CD14-positive monocyte (primary cell): ENCODE measurements at regions of chr16 and their contacts with region 1.

Region 1: GRCh38 chr16:31142109-31143010 is 6.8 kb upstream of the PRSS8 start:
- DNase-seq: peak; percentile 91 to 96 (median 94)
- H3K4me3 ChIP-seq: peak overlapping the region; percentile 7 to 70 (median 28)
- H3K4me3 Mint-ChIP-seq: peak overlapping the region; percentile 73 to 85
- H3K27ac ChIP-seq: peak overlapping the region; percentile 72 to 78
- H3K27ac Mint-ChIP-seq: peak overlapping the region; percentile 85 to 95 (median 93)
- H3K4me1 ChIP-seq: peaks cover 35 to 47% of the 10 kb centered on the region in 2 donors
- H3K4me1 Mint-ChIP-seq: peaks cover 36% of the 10 kb centered on the region
- H3K27me3 ChIP-seq: no peaks in the 10 kb centered on the region
- H3K27me3 Mint-ChIP-seq: peaks cover 0 to 4% (median 2%) of the 10 kb centered on the region in 3 donors
- CTCF ChIP-seq: peak; percentile 90

Region 2: DNA sequence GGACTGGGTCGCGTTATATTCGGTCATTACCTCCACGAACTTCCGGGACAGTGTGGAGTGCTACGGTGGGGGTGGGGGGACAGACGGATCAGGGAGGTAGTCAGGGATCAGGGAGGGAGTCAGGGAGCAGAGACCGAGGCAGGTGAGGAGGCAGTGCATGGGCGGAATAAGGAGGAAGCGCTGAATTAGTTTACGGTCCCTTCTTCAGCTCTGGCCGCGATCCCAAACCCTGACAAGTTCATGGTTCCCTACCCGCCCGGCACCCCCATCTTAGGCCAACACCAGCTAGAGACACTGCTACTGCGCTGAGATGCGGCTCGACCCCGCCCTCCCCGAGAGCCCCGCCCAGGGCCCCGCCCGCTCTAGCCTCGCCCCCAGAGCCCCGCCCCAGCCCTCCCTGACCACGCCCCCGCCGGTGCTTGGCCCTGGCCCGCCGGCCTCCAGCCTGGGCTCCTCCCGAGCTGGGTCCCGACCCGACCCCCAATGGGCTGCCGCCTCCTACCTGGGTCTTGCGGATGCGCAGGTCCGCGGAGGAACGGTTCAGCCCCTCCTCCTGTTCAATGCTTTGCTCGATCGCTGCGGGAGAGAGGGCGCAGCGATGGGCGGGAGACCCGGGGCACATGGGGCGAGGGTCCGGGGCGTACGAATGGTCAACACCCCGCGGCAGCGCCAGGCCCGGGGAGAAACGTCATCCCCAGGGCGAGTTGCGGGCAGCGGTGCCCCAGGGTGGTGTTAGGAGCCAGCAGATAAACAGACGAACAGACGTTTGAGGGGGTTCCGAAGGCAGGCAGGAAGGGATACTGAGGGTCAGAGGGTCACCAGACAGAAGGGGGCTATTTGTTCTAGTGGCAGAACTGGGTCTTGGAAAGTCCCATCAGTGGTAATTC is 145.1 kb before region 1 on chr16:
- intact Hi-C with region 1: loop called in 1 of 2 experiments (anchors 10 kb)
- DNase-seq: peak; percentile 79 to 82 (median 80)
- H3K4me3 ChIP-seq: peak overlapping the region; percentile 53 to 83 (median 58)
- H3K4me3 Mint-ChIP-seq: peak overlapping the region; percentile 83 to 93
- H3K27ac ChIP-seq: peak overlapping the region; percentile 67 to 87
- H3K27ac Mint-ChIP-seq: peak overlapping the region; percentile 82 to 94 (median 89)
- H3K4me1 ChIP-seq: peaks cover 24 to 32% of the 10 kb centered on the region in 2 donors
- H3K4me1 Mint-ChIP-seq: peaks cover 31% of the 10 kb centered on the region
- H3K27me3 ChIP-seq: peaks cover 0 to 3% of the 10 kb centered on the region in 2 donors
- H3K27me3 Mint-ChIP-seq: peaks cover 1 to 17% (median 4%) of the 10 kb centered on the region in 3 donors
- CTCF ChIP-seq: no peak

Region 3: DNA sequence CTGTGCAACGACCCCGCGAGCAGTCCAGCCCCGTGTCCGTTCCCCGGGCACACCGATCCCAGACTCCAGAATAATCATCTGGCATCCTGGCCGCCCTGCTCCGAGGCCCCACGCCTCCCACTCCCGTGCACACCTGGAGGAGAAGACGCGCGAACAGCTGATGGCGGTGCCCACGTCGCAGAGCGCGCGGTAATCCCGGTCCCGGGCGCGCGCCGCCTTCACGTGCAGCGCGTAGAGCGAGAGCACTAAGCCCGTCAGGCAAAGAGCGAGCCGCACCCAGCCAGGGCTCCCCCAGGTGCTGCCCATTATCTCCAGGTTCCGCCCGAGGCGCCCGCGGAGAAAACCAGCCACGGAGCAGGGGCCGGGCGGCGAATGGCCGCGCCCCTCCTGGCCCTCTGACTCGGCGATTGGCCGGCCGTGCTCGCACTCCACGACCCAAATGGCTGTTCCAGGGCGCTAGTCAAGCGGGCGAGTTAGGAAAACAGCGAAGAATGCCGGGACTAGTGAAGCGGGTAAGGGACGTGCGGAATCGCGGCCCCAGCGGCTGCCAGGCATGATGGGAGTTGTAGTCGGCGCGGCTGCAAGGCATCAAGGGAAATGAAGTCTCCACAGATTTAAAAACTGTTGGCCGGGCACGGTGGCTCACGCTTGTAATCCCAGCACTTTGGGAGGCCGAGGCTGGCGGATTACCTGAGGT is 47.8 kb before region 1 on chr16 and contains the start of gene VKORC1:
- intact Hi-C with region 1: loop called in 1 of 2 experiments (anchors 10 kb)
- DNase-seq: peak; percentile 92 to 94 (median 93)
- H3K4me3 ChIP-seq: peak within 1 kb of the TSS; percentile 49 to 92 (median 92)
- H3K4me3 Mint-ChIP-seq: peak within 1 kb of the TSS; percentile 89 to 98
- H3K27ac ChIP-seq: peak within 1 kb of the TSS; percentile 52 to 74
- H3K27ac Mint-ChIP-seq: peak within 1 kb of the TSS; percentile 66 to 92 (median 86)
- H3K4me1 ChIP-seq: peaks cover 25 to 29% of the 10 kb centered on the region in 2 donors
- H3K4me1 Mint-ChIP-seq: peaks cover 21% of the 10 kb centered on the region
- H3K27me3 ChIP-seq: no peaks in the 10 kb centered on the region
- H3K27me3 Mint-ChIP-seq: peaks cover 0 to 4% (median 1%) of the 10 kb centered on the region in 3 donors
- CTCF ChIP-seq: no peak
- polyA plus RNA-seq, gene VKORC1: 59.2 to 113 (median 91.2) TPM

Region 4: DNA sequence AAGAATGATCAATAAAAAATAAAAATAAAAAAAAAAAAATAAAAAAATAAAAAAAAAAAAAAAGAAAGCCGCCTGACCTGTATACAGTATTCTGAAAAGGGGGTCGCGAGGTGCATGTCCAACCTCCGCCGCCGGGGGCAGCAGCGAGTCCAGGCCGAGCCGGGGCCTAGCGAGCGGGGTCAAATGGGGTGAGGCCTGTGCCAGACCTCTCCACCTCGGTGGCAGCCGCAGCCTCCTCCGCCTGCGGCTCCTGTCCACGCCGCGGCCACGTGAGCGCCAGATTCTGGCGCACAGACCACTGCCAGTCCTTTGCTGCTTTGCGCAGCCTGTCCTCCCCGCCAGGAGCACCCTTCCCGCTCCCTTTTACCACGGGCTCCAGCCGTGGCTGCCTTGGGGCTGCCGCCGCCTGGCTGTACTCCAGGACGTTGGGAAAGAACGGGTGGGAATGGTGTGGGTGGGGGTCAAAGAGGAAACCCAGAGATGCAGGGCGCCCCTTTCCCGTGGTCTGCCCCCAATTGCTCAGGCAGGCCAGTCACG is 36.6 kb before region 1 on chr16:
- intact Hi-C with region 1: loop called in 1 of 2 experiments (anchors 2 kb)
- DNase-seq: peak; percentile 78 to 87 (median 82)
- H3K4me3 ChIP-seq: peak overlapping the region in 2 of 3 experiments; percentile 18 to 57
- H3K4me3 Mint-ChIP-seq: peak overlapping the region; percentile 56 to 73
- H3K27ac ChIP-seq: no peak overlapping the region
- H3K27ac Mint-ChIP-seq: peak overlapping the region in 6 of 7 donors; percentile 75 to 87 (median 84)
- H3K4me1 ChIP-seq: peaks cover 26 to 37% of the 10 kb centered on the region in 2 donors
- H3K4me1 Mint-ChIP-seq: peaks cover 22% of the 10 kb centered on the region
- H3K27me3 ChIP-seq: no peaks in the 10 kb centered on the region
- H3K27me3 Mint-ChIP-seq: peaks cover 0 to 2% (median 2%) of the 10 kb centered on the region in 3 donors
- CTCF ChIP-seq: peak; percentile 81

Region 5: DNA sequence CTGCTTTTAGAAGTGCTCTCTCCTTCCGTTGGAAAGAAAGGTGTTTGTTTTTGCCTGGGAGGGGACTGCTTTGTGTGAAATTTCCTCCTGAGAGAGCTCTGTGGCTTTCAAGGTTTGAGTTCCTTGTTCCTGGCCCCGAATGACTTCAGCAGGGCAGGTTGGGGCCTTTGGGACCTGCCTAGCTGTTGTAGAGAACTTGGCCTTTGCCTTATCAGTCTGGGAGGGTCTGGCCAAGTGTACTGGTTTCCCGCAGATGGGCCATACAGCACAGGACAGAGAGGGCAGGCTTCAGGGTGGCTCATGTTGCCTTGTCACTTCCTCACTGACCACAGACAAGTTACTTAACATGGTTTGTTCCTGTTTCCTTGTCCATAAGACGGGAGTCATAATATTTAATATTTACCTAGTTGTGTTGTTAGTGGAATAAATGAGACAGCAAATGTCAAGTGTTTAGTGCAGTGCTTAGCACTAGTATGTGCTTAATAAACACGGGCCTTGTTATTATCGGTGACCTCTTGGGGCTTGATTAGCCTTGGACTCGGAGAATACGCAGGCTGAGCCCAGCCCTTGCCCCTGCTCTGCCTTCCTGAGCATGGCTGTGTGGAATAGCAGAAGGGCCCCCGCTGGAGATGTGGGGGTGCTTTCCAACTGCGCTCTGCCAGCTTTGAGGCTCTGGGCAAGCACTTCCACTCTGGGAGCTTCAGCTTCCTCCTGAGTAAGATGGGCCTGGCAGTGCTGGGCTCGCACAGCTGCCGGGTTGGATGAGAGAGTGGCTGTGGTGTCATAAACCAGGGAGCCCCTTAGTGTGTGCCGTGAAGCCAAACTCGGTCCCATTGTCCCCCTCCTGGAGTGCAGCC is 13.4 kb before region 1 on chr16:
- intact Hi-C with region 1: loop called in 1 of 2 experiments (anchors 2 kb)
- DNase-seq: peak; percentile 96 to 98 (median 97)
- H3K4me3 ChIP-seq: peak overlapping the region in 1 of 3 experiments; percentile 53
- H3K4me3 Mint-ChIP-seq: peak overlapping the region; percentile 53 to 84
- H3K27ac ChIP-seq: peak overlapping the region; percentile 99
- H3K27ac Mint-ChIP-seq: peak overlapping the region; percentile 98 to 100 (median 99)
- H3K4me1 ChIP-seq: peaks cover 60 to 76% of the 10 kb centered on the region in 2 donors
- H3K4me1 Mint-ChIP-seq: peaks cover 70% of the 10 kb centered on the region
- H3K27me3 ChIP-seq: no peaks in the 10 kb centered on the region
- H3K27me3 Mint-ChIP-seq: peaks cover 0 to 4% (median 0%) of the 10 kb centered on the region in 3 donors
- CTCF ChIP-seq: no peak

Region 6: GRCh38 chr16:31224092-31224955 is 82.0 kb after region 1 on chr16:
- intact Hi-C with region 1: no loop called
- DNase-seq: no peak
- H3K4me3 ChIP-seq: no peak overlapping the region
- H3K4me3 Mint-ChIP-seq: no peak overlapping the region
- H3K27ac ChIP-seq: no peak overlapping the region
- H3K27ac Mint-ChIP-seq: no peak overlapping the region
- H3K4me1 ChIP-seq: peaks cover 0 to 5% of the 10 kb centered on the region in 2 donors
- H3K4me1 Mint-ChIP-seq: peaks cover 15% of the 10 kb centered on the region
- H3K27me3 ChIP-seq: peaks cover 0 to 12% of the 10 kb centered on the region in 2 donors
- H3K27me3 Mint-ChIP-seq: peaks cover 15 to 34% (median 19%) of the 10 kb centered on the region in 3 donors
- CTCF ChIP-seq: no peak